ENCODE measurements at regions of chr16 and their contacts with region 1.

Region 1: DNA sequence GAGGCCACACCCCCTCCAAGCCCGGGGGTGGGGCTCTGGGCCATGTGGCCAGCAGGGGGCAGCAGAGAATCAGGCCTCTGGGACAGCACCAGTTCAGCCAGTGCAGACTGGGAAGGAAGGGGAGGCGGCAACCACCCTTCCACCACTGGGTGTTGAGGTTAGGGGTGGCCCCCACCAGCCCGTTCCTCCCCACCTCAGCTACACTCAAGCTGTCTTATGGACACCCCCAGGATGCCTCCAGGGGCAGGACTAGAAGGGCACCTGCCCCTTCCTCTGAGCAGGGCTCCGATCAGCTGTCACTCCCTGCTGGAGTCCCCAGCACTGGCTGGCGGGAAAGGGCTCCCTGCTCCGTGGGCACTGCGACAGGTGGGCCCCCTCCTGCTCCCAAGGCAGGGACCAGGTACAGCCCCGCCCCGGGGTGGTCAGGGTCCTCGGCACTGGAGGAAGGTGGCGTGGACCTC is 21.8 kb downstream of the KATNB1 start:
- DNase-seq: peak; percentile 83 to 90
- H3K4me3 ChIP-seq: no peak overlapping the region
- H3K27ac ChIP-seq: peak overlapping the region in 2 of 3 donors; percentile 43 to 45
- H3K4me1 ChIP-seq: peaks cover 0 to 4% of the 10 kb centered on the region in 2 donors
- H3K27me3 ChIP-seq: no peaks in the 10 kb centered on the region
- CTCF ChIP-seq: peak; percentile 89 to 96 (median 93)
- POLR2A ChIP-seq: no peak

Region 2: DNA sequence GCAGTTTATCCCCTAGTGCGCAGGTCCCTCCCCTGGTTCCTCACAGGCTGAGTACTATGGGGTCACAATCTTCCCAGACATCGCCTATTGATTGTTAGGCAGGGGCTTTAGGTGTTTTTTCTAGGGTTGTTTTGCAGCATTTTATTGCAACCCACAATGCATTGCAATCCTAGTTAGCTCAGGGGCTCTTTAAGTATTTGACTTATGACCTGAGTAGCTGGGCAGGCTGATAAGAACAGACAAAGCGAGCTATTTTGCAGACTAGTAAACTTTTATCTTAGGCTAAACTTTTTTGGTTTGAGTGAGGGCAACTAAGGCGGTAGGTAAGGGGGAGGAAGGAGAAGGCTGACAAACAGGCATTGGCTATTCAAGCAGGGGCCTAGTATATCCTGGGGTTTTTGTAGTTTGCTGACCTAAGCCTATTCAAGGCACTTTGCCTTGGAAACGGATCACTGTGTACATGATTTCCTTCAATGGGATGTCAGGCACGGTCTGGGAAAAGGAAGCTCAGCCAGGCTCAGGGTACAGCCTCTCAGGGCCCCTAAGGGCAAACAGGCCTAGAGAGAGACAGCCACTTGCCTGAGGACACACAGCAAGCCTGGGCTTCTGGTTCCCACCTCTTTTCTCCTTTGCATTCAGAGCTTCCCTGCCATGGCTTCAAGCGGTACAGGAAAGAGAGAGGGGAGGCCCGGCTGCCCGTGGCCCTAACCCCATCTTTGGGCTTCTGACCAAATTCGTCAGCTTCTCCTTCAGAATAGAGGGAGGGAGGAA is 56.4 kb before region 1 on chr16:
- intact Hi-C with region 1: no loop called
- DNase-seq: no peak
- H3K4me3 ChIP-seq: no peak overlapping the region
- H3K27ac ChIP-seq: no peak overlapping the region
- H3K4me1 ChIP-seq: peaks cover 0 to 14% of the 10 kb centered on the region in 2 donors
- H3K27me3 ChIP-seq: no peaks in the 10 kb centered on the region
- CTCF ChIP-seq: no peak
- POLR2A ChIP-seq: no peak

Region 3: GRCh38 chr16:57863434-57864160 is 106.2 kb after region 1 on chr16:
- intact Hi-C with region 1: loop called (anchors 2 kb)
- DNase-seq: peak; percentile 69 to 74
- H3K4me3 ChIP-seq: no peak overlapping the region
- H3K27ac ChIP-seq: no peak overlapping the region
- H3K4me1 ChIP-seq: no peaks in the 10 kb centered on the region
- H3K27me3 ChIP-seq: no peaks in the 10 kb centered on the region
- CTCF ChIP-seq: peak in 5 of 6 experiments; percentile 40 to 84 (median 74)
- POLR2A ChIP-seq: no peak

Region 4: DNA sequence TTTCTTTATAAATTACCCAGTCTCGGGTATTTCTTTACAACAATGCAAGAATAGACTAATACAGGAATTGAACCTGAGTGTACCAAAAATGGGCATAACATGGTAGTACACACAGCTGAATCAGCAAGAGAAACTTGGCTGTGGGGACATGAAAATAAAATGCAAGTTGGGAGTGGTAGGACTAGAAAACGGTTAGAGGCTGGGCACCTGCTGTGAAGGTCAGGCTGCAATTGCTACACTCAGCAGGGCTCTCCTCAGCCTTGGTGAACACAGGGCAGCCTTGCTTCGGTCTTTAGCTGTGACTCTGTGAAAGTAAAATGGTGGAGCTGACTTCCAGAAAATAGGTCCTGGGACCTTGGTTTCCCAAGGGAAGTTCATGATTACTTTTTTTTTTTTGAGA is 168.0 kb after region 1 on chr16:
- intact Hi-C with region 1: no loop called
- DNase-seq: no peak
- H3K4me3 ChIP-seq: no peak overlapping the region
- H3K27ac ChIP-seq: no peak overlapping the region
- H3K4me1 ChIP-seq: no peaks in the 10 kb centered on the region
- H3K27me3 ChIP-seq: no peaks in the 10 kb centered on the region
- CTCF ChIP-seq: no peak
- POLR2A ChIP-seq: no peak